Naive thymus-derived CD4-positive, alpha-beta T cell (primary cell): ENCODE measurements at regions of chr3 and their contacts with region 1.

Region 1: GRCh38 chr3:50674349-50675178 is at the start of gene DOCK3:
- DNase-seq: peak; percentile 30 to 77 (median 69)
- ATAC-seq: peak; percentile 92
- H3K4me3 ChIP-seq: peak within 1 kb of the TSS; percentile 63
- H3K4me3 Mint-ChIP-seq: peak within 1 kb of the TSS; percentile 71 to 87 (median 81)
- H3K27ac ChIP-seq: no peak within 1 kb of the TSS
- H3K27ac Mint-ChIP-seq: peak within 1 kb of the TSS in 4 of 9 donors; percentile 4 to 58 (median 40)
- H3K4me1 ChIP-seq: no peaks in the 10 kb centered on the region
- H3K4me1 Mint-ChIP-seq: peaks cover 4 to 10% (median 6%) of the 10 kb centered on the region in 7 donors
- H3K27me3 ChIP-seq: peaks cover 0 to 3% of the 10 kb centered on the region in 2 donors
- H3K27me3 Mint-ChIP-seq: peaks cover 17 to 65% (median 32%) of the 10 kb centered on the region in 5 donors
- total RNA-seq, gene DOCK3: 1.5 to 2.9 (median 1.9) TPM

Region 2: DNA sequence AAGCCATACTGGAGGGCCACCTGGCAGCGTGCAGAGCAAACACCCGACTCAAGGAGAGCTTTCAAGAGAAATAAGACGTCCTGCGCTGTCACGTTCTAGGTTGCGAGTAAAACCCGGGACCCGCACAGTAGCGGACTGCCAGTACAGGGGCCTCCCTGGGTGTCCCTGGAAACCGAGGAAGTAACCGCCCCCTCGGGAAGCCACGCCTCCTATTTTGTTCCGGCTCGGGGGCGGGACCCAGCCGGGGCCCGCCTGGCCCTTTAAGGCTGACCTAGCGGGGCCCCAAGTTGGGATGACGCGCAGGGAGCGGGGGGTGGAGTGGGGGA is 57.8 kb before region 1 on chr3:
- CTCF ChIA-PET with region 1: interaction called, 3 read pairs
- POLR2A ChIA-PET with region 1: interaction called, 4 read pairs
- intact Hi-C with region 1: loop called (anchors 1 kb)
- DNase-seq: peak; percentile 87 to 97 (median 93)
- ATAC-seq: peak; percentile 78
- H3K4me3 ChIP-seq: peak overlapping the region; percentile 77
- H3K4me3 Mint-ChIP-seq: peak overlapping the region; percentile 87 to 97 (median 92)
- H3K27ac ChIP-seq: peak overlapping the region; percentile 64
- H3K27ac Mint-ChIP-seq: peak overlapping the region; percentile 88 to 96 (median 91)
- H3K4me1 ChIP-seq: peaks cover 61 to 63% of the 10 kb centered on the region in 2 donors
- H3K4me1 Mint-ChIP-seq: peaks cover 47 to 76% (median 71%) of the 10 kb centered on the region in 7 donors
- H3K27me3 ChIP-seq: no peaks in the 10 kb centered on the region
- H3K27me3 Mint-ChIP-seq: peaks cover 0 to 2% (median 0%) of the 10 kb centered on the region in 5 donors